ENCODE measurements at regions of chr19 and their contacts with region 1.

Region 1: GRCh38 chr19:17075035-17075863 is at the starts of genes HAUS8 and MYO9B:
- H3K4me3 Mint-ChIP-seq: peak within 1 kb of the TSS; percentile 90
- H3K27ac Mint-ChIP-seq: peak within 1 kb of the TSS; percentile 88
- H3K4me1 Mint-ChIP-seq: peaks cover 68% of the 10 kb centered on the region
- H3K27me3 Mint-ChIP-seq: no peaks in the 10 kb centered on the region

Region 2: GRCh38 chr19:17058236-17058635 is 17.0 kb before region 1 on chr19:
- intact Hi-C with region 1: no loop called
- H3K4me3 Mint-ChIP-seq: no peak overlapping the region
- H3K27ac Mint-ChIP-seq: no peak overlapping the region
- H3K4me1 Mint-ChIP-seq: peaks cover 9% of the 10 kb centered on the region
- H3K27me3 Mint-ChIP-seq: no peaks in the 10 kb centered on the region

Region 3: GRCh38 chr19:17090583-17090982 is 15.3 kb after region 1 on chr19:
- intact Hi-C with region 1: loop called (anchors 2 kb)
- H3K4me3 Mint-ChIP-seq: no peak overlapping the region
- H3K27ac Mint-ChIP-seq: peak overlapping the region; percentile 90
- H3K4me1 Mint-ChIP-seq: peaks cover 90% of the 10 kb centered on the region
- H3K27me3 Mint-ChIP-seq: no peaks in the 10 kb centered on the region

Region 4: DNA sequence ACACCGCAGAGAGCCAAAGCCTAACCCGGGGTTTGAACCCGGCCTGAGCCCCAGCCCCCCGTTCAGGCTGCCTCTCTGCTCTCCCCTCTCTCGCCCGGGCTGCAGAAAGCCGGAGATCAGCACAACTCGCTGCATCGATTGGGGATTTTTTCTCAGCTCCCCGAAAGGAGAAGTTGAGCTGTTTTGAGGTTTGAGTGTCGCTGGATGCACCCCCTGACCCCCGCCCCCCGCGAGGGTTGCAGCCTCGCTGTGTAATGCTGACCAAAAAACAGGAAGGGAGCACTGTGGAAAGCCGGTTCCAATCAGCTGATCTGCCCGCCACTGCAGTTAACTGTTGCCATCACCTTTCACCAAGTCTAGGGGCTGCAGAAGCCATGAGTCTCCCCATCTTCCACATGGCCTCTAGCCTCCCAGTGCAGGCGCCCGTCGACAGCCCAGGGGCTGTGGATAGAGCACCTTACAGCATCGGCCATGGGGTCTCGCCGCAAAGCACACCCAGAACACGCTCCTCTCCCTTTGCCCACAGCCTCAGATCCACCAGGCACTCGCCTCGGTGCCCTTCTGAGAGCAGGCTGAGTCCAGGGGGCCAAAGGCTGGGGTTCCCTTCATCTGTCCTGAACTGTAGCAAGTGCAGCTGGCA is 34.8 kb after region 1 on chr19:
- intact Hi-C with region 1: loop called (anchors 5 kb)
- H3K4me3 Mint-ChIP-seq: peak overlapping the region; percentile 76
- H3K27ac Mint-ChIP-seq: peak overlapping the region; percentile 90
- H3K4me1 Mint-ChIP-seq: peaks cover 90% of the 10 kb centered on the region
- H3K27me3 Mint-ChIP-seq: no peaks in the 10 kb centered on the region

Region 5: DNA sequence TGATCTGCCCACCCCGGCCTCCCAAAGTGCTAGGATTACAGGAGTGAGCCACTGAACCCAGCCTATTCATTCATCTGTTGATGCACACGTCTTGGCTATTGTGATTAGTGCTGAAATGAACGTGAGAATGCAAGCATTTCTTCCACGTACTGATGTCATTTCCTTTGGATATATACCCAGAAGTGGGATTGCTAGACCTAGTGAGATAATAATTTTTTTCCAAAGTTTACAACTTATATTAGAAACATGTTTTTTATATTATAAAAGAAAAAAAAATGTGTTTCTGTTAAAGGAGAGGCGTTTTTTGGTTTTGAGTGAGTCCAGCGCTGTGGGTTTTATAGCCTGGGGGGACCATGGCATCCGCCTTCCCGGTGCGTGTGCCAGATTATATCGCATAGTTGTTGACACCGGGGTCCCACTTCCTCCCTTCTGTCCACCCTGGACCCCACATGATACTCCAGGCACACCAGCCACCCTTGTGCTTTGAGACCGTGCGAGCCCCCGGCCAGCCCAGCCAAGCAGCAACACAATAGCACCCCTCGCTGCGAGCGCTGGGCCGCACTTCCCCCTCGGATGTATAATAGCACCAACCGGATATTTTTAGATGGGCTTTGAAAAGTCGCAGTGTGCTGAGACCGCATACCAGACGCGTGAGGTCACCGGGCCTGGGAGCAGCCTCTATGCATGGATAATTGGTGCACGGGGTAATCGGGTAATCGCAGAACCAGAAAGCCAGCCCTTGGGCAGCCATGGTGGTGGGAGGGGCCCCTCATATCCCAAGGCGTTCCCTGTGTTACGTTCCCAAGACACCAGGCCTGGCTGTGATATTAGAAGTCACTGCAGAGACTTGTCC is 60.0 kb after region 1 on chr19:
- intact Hi-C with region 1: loop called (anchors 5 kb)
- H3K4me3 Mint-ChIP-seq: no peak overlapping the region
- H3K27ac Mint-ChIP-seq: peak overlapping the region; percentile 59
- H3K4me1 Mint-ChIP-seq: peaks cover 39% of the 10 kb centered on the region
- H3K27me3 Mint-ChIP-seq: no peaks in the 10 kb centered on the region

Region 6: DNA sequence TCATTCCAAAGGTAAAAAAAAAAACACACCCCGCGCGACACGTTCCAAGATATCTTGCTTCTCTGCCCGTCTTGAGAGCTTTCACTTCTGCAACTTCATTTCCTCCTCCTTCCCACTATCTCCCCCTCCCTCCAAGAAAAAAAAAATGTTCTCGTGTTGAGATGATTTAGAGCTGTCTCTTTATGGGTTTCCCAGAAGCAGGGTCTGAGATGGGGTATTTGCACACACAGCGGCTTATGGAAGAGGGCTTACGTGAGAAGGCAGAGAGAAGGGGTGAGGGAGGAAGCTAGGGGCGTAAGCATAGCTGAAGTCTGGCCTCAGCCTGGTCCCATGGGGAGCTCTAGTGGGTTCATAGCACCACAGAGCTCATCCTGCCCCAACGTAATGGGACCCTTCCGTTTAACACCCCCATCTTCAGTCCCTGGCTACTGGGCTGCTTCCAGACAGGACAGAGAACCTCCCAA is 108.6 kb after region 1 on chr19:
- intact Hi-C with region 1: loop called (anchors 10 kb)
- H3K4me3 Mint-ChIP-seq: peak overlapping the region; percentile 62
- H3K27ac Mint-ChIP-seq: peak overlapping the region; percentile 77
- H3K4me1 Mint-ChIP-seq: peaks cover 39% of the 10 kb centered on the region
- H3K27me3 Mint-ChIP-seq: no peaks in the 10 kb centered on the region

Region 7: DNA sequence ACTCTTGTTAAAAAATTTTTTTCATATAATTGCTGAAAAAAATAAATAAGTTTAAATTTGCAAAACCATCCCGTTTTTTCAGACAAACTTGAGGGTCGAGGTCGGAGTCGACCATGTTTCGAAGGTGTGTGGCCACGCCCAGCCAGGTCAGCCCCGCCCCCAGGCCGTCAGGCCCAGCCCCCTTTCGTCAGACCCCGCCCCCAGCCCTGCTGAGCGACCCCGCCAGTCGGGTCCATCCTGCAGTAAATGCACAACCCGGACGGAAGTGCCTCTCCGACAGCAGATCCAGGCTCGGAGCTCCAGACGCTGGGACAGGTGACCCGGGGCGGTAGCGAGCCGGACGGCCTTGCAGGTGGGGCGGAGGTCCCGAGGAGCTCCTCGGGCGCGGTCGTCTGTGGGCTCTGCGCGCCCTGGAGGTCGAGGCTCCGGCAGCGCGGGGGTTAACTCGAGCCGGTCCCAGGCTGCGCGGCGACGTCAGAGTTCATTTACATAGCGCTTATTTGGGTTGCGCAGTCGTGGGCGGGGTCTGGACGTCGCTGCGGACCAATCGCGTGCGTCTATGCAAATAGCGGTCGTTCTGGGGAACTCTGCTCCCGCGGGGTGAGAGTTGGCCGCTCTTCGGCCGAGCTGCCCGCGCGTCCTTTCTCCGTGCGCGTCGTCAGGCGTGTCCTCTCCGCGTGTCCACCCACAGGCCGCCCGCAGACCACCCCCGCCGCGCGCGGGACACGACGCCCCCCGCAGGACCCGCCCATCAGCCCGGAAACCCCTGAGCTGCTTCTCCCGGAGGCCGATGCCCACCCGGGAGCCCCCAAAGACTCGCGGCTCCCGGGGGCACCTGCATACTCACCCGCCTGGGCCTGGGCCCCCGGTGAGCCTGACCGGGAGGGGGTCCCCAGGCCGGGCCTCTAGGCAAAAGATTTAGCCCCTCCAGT is 151.0 kb after region 1 on chr19 and contains the start of gene OCEL1:
- intact Hi-C with region 1: loop called (anchors 1 kb)
- H3K4me3 Mint-ChIP-seq: peak within 1 kb of the TSS; percentile 81
- H3K27ac Mint-ChIP-seq: peak within 1 kb of the TSS; percentile 90
- H3K4me1 Mint-ChIP-seq: peaks cover 27% of the 10 kb centered on the region
- H3K27me3 Mint-ChIP-seq: no peaks in the 10 kb centered on the region